Activated CD4-positive, alpha-beta memory T cell treated with anti-CD3 and anti-CD28 coated beads for 36 hours (primary cell): ENCODE measurements at regions of chr12 and their contacts with region 1.

Region 1: DNA sequence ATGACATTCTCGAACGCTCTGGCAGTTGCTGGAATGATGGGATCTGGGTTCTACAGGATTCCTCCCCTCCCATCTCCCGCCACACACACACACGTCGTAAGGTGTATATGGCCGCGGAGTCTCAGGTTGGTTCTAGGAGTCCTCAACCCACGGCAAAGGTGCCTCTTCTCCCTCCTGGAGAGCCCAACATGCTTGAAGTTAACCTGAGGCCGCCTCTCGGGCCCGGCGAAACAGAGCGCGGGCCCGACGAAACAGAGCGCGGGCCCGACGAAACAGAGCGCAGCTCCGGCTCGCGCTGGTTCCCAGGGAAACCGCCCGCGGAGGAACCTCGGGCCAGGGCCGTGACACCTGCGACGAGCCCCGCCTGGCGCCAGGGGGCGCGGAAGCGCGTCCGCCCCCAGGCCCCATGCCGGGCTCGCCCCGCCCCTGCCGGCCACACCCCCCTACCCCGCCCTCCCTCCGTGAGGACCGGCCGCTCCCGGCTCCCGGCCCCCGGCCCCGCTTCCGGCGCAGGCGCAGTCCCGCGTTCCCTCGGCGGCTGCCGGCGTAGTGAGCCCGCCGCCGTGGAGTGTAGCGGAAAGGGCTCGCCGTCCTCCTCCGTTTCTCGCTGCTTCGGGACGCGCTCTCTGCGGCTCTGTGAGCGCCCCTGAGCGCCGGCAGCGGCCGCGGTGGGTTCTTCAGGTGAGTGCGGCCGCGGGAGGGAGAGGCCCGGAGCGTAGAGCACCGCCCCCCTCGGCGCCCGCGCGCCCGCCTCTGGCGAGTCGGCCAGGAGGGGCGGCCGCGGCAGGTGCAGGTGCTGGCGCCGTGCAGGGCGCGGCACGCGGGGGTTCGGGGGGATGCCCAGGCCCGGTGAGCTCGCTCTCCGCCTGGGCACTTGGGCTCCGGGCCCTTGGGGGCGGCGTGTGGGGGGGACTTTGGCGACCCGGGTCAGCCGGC is at the start of gene RAB3IP:
- DNase-seq: peak; percentile 95
- H3K4me3 Mint-ChIP-seq: peak within 1 kb of the TSS; percentile 90
- H3K27ac Mint-ChIP-seq: peak within 1 kb of the TSS; percentile 84
- H3K4me1 Mint-ChIP-seq: peaks cover 24% of the 10 kb centered on the region
- H3K27me3 Mint-ChIP-seq: peaks cover 1% of the 10 kb centered on the region
- total RNA-seq, gene RAB3IP: 30.3 to 34.0 TPM

Region 2: DNA sequence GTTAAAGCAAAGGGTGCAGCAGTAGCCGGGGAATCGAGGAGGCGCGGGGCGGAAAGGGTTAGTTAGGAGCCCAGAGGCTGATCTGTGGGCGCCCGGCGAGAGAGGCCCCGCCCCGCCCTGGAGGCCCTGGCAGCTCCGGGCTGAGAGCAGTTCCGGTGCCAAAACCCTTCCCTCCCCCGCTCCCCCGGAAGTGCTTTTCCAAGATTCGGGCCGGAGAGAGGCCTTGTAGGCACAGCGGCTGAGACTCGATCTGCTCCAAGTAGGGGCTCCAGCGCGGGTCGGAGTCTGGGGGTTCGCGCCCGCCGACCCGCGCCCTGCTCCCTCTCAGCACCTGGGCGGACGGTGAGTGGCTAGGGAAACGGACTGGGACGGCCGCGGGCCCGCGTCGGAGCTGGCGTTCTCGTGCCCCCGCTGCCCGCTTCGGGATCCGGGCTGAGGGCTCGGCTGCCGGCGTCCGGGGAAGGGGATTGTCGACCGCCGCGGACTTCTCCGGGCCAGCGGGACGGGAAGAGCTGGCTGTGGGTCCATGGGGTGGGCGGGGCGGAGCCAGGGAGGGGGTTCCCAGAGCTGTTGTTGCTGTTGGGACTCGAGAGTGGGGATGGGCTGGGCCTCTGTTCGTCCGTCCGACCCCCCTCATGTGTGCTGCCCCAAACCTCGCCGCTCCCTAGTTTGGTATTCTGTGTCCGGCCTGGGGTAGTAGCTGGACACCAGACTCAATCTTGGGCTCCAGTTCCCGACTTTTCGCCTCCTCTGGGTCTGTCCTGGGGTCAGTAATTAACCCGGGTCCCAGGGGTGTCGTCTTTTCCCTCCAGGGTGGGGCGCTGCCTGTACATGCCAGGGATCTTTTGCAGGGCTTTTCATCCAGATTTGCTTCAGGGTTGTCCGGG is 268.2 kb before region 1 on chr12 and contains the start of gene FRS2:
- CTCF ChIA-PET with region 1: no interaction called
- POLR2A ChIA-PET with region 1: no interaction called
- intact Hi-C with region 1: loop called (anchors 1 kb)
- DNase-seq: peak; percentile 92
- H3K4me3 Mint-ChIP-seq: peak within 1 kb of the TSS; percentile 98
- H3K27ac Mint-ChIP-seq: peak within 1 kb of the TSS; percentile 93
- H3K4me1 Mint-ChIP-seq: peaks cover 41% of the 10 kb centered on the region
- H3K27me3 Mint-ChIP-seq: no peaks in the 10 kb centered on the region
- total RNA-seq, gene FRS2: 8.6 to 9.5 TPM

Region 3: GRCh38 chr12:69534389-69534822 is 204.2 kb before region 1 on chr12:
- CTCF ChIA-PET with region 1: no interaction called
- POLR2A ChIA-PET with region 1: no interaction called
- intact Hi-C with region 1: loop called (anchors 5 kb)
- DNase-seq: peak; percentile 59
- H3K4me3 Mint-ChIP-seq: no peak overlapping the region
- H3K27ac Mint-ChIP-seq: peak overlapping the region; percentile 30
- H3K4me1 Mint-ChIP-seq: peaks cover 20% of the 10 kb centered on the region
- H3K27me3 Mint-ChIP-seq: no peaks in the 10 kb centered on the region

Region 4: DNA sequence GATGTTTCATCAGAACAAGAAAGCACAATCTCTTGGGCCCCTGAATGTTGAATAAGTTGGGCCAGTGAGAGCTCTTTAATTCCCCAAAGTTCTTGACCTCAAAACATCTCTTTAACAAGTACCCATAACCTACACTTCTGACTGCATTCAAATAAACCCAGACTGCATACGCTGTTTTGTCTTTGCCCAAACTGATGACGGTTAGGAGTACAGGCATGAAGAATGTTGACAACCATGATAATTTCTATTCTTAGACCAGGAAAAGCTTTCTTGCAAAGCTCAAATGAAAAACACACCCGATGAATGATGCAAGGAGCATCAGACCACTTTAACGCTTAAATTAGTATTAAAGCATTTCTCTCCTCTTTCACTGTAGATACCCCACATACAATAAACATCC is 11.7 kb before region 1 on chr12:
- CTCF ChIA-PET with region 1: no interaction called
- POLR2A ChIA-PET with region 1: no interaction called
- intact Hi-C with region 1: no loop called
- DNase-seq: no peak
- H3K4me3 Mint-ChIP-seq: no peak overlapping the region
- H3K27ac Mint-ChIP-seq: no peak overlapping the region
- H3K4me1 Mint-ChIP-seq: no peaks in the 10 kb centered on the region
- H3K27me3 Mint-ChIP-seq: peaks cover 6% of the 10 kb centered on the region

Region 5: GRCh38 chr12:69816082-69816481 is 77.5 kb after region 1 on chr12:
- CTCF ChIA-PET with region 1: no interaction called
- POLR2A ChIA-PET with region 1: no interaction called
- intact Hi-C with region 1: loop called (anchors 10 kb)
- DNase-seq: no peak
- H3K4me3 Mint-ChIP-seq: no peak overlapping the region
- H3K27ac Mint-ChIP-seq: no peak overlapping the region
- H3K4me1 Mint-ChIP-seq: no peaks in the 10 kb centered on the region
- H3K27me3 Mint-ChIP-seq: no peaks in the 10 kb centered on the region

Region 6: DNA sequence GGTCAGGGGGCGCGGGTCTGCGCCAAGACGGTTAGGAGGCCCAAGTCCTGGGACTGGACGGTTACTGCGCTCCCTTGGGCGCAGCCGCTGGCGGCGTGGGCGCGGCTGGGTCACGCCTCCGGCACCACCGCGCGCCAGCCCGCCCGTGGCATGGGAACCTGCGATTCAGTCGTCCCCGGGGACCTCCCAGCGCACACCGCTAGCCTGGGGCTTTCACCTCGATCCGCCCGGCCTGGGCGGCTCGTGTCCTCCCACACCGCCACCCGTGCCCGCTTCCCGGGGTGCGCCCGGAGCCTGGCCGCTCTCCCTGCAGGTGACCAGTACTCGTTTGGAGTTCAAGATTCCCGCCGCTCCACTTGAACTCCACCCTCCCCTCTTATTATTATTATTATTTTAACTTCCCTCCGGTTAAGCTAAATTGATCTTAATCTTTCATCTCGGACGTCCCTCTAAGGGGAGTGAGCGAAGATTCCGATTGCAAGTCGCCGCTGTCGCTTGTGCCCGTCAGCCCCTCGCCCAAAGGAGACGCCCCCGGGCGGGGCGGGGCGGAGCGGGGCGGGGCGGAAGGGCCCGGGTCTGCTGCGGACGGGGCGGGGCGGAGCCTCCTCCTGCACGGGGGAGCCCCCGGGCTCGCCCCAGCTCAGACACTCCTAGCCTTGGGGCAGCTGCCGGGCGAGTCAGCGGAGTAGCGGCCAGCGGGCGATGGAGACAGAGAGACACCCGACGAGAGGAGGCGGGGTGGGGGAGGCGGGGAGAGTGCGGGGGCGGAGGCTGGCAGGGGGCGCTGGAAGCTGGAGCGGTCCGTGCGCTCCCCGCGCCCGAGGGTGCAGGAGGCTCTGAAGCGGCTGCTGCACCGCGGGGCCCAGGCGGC is 627.3 kb after region 1 on chr12 and contains the start of gene KCNMB4:
- CTCF ChIA-PET with region 1: no interaction called
- POLR2A ChIA-PET with region 1: no interaction called
- intact Hi-C with region 1: loop called (anchors 1 kb)
- DNase-seq: peak; percentile 83
- H3K4me3 Mint-ChIP-seq: peak within 1 kb of the TSS; percentile 90
- H3K27ac Mint-ChIP-seq: peak within 1 kb of the TSS; percentile 51
- H3K4me1 Mint-ChIP-seq: peaks cover 18% of the 10 kb centered on the region
- H3K27me3 Mint-ChIP-seq: peaks cover 5% of the 10 kb centered on the region
- total RNA-seq, gene KCNMB4: 1.3 to 1.5 TPM

Region 7: DNA sequence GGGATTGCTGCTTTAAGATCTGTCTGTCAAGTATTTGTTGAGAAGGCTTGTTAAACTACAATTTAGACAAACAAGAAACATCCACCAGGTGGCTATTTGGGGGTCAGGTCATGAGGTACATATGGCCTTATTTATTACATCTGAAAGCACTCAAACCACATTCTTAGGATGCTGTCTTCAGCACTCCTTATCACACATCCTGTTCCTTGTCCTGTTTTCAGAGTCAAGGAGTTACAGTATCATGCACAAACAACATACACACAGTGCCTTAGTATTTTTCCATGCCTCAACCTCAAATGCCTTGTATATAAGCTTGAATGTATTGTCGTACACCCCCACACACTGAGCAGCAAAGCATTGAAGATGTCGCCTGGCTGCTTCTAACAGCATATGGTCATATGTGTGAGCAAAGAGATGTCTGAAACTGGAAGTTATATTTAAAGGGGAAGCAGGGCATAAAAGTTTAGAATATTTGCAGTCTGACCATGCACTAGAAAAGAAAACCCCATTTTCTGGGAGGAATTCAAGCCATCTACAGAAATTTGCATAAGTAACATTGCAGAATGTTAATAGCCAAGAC is 711.2 kb after region 1 on chr12:
- CTCF ChIA-PET with region 1: no interaction called
- POLR2A ChIA-PET with region 1: no interaction called
- intact Hi-C with region 1: no loop called
- DNase-seq: no peak
- H3K4me3 Mint-ChIP-seq: no peak overlapping the region
- H3K27ac Mint-ChIP-seq: no peak overlapping the region
- H3K4me1 Mint-ChIP-seq: no peaks in the 10 kb centered on the region
- H3K27me3 Mint-ChIP-seq: no peaks in the 10 kb centered on the region